SK-MEL-5 (cell line): ENCODE measurements at regions of chr1 and their contacts with region 1.

Region 1: DNA sequence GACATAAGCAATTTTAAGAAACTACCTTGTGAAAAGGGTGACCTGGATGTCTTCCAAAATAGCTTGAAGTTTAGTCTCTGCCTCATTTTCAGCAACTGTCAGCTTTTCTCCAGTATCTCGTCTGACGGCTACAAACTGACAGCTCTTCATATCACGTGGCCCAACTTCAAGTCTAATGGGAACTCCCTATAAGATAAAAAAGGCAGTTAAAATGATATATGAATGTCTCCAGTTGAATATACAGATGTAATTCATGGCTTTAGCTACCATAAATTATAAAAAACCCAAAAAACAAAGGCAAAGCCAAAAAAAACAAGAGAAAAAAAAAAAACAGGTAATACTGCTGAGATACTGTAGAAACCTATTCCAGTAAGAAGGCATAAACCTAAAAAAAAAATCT is 44.9 kb upstream of the SLC30A10 start:
- DNase-seq: no peak

Region 2: DNA sequence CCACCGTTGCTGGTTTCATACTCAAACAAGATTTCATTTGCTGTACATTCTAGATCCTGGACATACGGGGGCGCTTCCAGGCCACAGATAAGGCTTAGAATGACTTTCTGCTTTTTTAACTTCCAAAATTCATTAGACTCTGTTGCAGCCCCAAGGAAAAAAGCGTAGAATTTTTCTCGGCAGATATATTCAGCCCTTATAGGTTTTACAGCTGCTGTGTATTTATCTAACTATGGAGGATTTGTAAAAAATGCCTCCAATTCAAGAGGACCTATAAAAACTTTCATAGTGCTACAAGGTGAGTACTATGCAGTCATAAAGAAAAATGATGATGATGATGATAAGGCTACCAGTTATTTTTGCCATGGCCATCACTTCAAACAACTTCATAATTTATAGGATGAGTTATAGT is 96.4 kb before region 1 on chr1:
- in situ Hi-C with region 1: loop called (anchors 10 kb)
- DNase-seq: peak; percentile 76